ENCODE measurements at regions of chr17 and their contacts with region 1.

Region 1: GRCh38 chr17:78112518-78113226 is 15.9 kb downstream of the TMC6 start:
- DNase-seq: peak; percentile 98
- H3K4me3 ChIP-seq: no peak overlapping the region
- H3K27ac ChIP-seq: no peak overlapping the region
- H3K4me1 ChIP-seq: peaks cover 0 to 14% of the 10 kb centered on the region in 2 experiments; a peak in 1 of 4 replicates
- H3K27me3 ChIP-seq: 0 out of 2 replicates have a peak, but pooled peaks cover 6% of the 10 kb centered on the region
- CTCF ChIP-seq: peak; percentile 100
- EP300 ChIP-seq: no peak
- RAD21 ChIP-seq: peak; percentile 96

Region 2: DNA sequence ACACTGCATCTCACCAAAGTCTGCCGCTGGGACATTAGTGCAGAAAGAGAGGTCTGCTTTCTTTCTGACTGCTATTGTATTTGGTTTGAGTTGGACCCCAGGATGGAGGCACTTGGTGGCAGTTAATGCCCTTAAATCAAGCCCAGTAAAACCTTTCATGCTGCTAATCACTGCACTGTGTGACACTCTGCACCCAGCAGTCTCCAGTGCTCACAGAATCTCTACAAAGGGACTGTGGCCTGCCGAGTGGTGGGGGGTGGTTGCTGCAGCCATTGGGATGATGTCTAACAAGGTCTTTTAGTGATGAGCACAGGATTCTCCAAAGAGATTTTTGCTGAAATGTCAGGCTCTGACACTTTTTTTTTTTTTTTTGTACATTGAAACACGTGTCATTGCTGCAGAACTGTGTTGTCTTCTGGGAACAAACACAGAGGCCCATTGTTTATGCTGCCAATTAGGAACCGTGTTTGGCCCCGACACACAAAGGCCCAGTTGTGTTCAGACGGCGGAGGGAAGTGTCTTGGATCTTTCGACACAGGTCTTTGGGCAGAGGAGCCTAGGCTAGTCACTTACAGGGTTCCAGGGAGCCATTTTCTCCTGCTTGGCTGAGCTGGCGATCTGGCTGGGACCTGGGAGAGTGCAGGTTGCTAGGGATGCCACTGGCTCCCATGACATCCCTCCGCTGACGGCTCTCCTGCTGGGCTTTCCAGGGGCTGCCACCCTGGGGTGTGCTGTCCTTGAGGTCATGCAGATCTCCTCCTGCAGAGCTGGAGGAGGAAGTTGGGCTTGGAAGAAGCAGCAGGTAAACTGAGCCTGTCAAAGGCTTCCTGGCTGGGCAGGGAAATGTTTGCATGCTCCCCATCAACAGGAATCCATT is 170.3 kb before region 1 on chr17:
- CTCF ChIA-PET with region 1: no interaction called
- POLR2A ChIA-PET with region 1: no interaction called
- DNase-seq: no peak
- H3K4me3 ChIP-seq: no peak overlapping the region
- H3K27ac ChIP-seq: no peak overlapping the region
- H3K4me1 ChIP-seq: no peaks in the 10 kb centered on the region
- H3K27me3 ChIP-seq: peaks cover 42% of the 10 kb centered on the region; the same call in 1 of the 2 replicates
- CTCF ChIP-seq: no peak
- EP300 ChIP-seq: no peak
- RAD21 ChIP-seq: no peak

Region 3: DNA sequence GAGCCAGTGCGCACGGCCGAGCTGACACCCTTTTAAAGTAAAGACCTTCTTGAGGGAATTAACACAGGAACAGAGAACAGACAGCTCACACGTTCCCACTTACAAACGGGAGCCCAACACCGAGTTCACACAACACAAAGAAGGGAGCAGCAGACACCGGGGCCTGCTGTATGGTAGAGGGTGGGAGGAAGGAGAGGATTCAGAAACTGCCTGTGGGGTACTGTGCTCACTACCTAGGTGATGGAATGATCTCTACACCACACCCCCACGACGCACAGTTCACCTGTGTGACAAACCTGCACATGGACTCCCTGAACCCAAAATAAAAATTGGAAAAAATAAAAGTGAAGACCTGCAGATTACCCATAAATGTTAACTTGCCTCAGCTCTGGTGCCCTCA is 16.6 kb before region 1 on chr17:
- CTCF ChIA-PET with region 1: interaction called, 40 read pairs
- POLR2A ChIA-PET with region 1: no interaction called
- DNase-seq: no peak
- H3K4me3 ChIP-seq: no peak overlapping the region
- H3K27ac ChIP-seq: no peak overlapping the region
- H3K4me1 ChIP-seq: peaks cover 0 to 3% of the 10 kb centered on the region in 2 experiments; a peak in 1 of 4 replicates
- H3K27me3 ChIP-seq: no peaks in the 10 kb centered on the region
- CTCF ChIP-seq: no peak
- EP300 ChIP-seq: no peak
- RAD21 ChIP-seq: no peak

Region 4: DNA sequence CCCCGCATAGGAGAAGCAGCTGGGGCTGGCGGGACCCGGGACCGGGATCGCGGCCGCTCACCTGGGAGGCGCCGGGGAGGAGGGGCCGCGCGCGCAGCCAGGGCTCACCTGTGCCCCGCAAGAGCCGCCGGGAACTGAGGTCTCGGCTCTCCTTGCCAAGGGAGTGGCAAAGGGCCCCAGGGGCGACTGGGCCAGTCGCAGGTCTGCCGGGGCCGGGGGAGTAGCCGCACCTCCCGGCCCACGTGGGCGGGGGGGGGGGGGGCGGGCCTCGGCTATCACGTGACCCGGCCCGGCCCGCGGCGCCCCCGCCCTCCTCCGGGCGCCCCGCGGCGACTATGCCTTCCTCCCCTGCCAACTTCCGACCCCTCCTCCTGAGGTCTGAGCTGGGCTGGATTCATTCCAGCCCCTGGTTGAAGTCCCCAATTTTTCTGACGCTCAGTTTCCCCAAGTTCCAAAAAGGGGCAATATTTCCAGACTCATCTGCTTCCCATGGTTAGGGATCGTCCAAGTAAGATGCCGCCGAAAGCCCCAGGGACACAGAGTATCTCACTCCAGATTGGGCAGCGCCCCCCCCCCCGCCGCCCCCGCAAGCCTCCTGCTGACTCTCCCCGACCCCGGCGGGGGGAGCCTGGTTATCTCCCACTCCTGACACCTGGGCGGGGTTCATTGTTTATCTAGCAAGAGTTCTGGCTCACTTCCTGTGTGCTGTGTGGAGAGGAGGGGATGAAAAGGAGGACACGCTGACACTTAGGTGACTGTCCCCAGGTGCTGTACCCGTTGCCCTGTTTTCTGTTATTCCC is 16.1 kb after region 1 on chr17 and contains the start of gene TMC6:
- CTCF ChIA-PET with region 1: interaction called, 100 read pairs
- POLR2A ChIA-PET with region 1: no interaction called
- DNase-seq: peak; percentile 93
- H3K4me3 ChIP-seq: peak within 1 kb of the TSS; percentile 74 to 75
- H3K27ac ChIP-seq: no peak within 1 kb of the TSS; a peak in 1 of 4 replicates
- H3K4me1 ChIP-seq: peaks cover 4 to 39% of the 10 kb centered on the region in 2 experiments; a peak in 1 of 4 replicates
- H3K27me3 ChIP-seq: peaks cover 3% of the 10 kb centered on the region
- CTCF ChIP-seq: no peak
- EP300 ChIP-seq: no peak
- RAD21 ChIP-seq: no peak
- polyA plus RNA-seq, gene TMC6: 3.8 and 5.5 TPM in 2 replicates

Region 5: DNA sequence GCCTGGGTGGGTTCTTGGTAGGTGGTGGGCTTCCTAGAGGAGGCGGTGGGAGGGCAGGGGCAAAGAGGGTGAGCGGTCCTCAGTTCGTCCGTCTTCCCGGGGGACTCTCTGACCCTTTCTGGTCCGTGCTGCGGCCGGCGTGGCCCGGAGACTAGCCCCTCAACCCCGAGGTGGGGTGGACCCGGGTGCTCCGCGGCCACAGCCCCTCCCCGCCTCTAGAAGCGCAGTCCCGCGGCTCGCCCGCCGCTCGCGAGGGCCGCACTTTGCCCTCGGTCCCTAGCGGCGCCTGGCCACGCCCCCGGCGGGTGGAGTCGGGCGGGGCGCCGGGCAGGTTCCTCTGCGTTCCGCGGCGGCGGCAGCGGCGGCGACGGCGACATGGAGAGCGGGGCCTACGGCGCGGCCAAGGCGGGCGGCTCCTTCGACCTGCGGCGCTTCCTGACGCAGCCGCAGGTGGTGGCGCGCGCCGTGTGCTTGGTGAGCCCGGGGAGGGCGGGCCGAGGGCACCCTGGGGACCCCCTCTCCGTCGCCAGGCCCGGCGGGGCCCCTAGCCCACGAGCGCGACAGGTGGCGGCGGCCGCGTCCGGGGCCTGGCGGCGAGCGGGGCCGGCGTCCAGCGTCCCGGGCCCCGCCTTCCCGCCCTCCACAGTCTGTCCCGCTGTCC is 55.7 kb after region 1 on chr17 and contains the start of gene SYNGR2:
- CTCF ChIA-PET with region 1: interaction called, 131 read pairs
- POLR2A ChIA-PET with region 1: no interaction called
- DNase-seq: peak; percentile 99
- H3K4me3 ChIP-seq: peak within 1 kb of the TSS; percentile 71 to 85
- H3K27ac ChIP-seq: peak within 1 kb of the TSS in 1 of 2 experiments; percentile 64; a peak in 2 of 4 replicates
- H3K4me1 ChIP-seq: peaks cover 8 to 17% of the 10 kb centered on the region in 2 experiments; a peak in 2 of 4 replicates
- H3K27me3 ChIP-seq: no peaks in the 10 kb centered on the region
- CTCF ChIP-seq: no peak
- EP300 ChIP-seq: peak; percentile 24 to 31; a peak in 1 of 4 replicates
- RAD21 ChIP-seq: peak; percentile 18; the same call in 1 of the 2 replicates
- polyA plus RNA-seq, gene SYNGR2: 160 and 181 TPM in 2 replicates